ENCODE measurements at regions of chr17 and their contacts with region 1.

Region 1: GRCh38 chr17:81917565-81918332 is at the start of gene SIRT7:
- DNase-seq: peak; percentile 72
- ATAC-seq: peak; percentile 67
- H3K4me3 ChIP-seq: peak within 1 kb of the TSS; percentile 87 to 94 (median 93)
- H3K27ac ChIP-seq: peak within 1 kb of the TSS; percentile 46
- H3K4me1 ChIP-seq: peaks cover 27% of the 10 kb centered on the region
- H3K27me3 ChIP-seq: no peaks in the 10 kb centered on the region
- CTCF ChIP-seq: no peak; the same call in 1 of the 2 replicates
- EP300 ChIP-seq: no peak
- POLR2A ChIP-seq: peak; percentile 50 to 80; a peak in 3 of 4 replicates
- RAD21 ChIP-seq: peak; percentile 66
- total RNA-seq, gene SIRT7: 14.5 and 24.8 TPM in 2 replicates

Region 2: GRCh38 chr17:81934850-81935708 is 17.3 kb after region 1 on chr17:
- CTCF ChIA-PET with region 1: no interaction called
- POLR2A ChIA-PET with region 1: interaction called, 14 read pairs
- in situ Hi-C with region 1: no loop called
- intact Hi-C with region 1: no loop called
- DNase-seq: no peak
- ATAC-seq: no peak
- H3K4me3 ChIP-seq: peak overlapping the region in 1 of 3 experiments; percentile 88; a peak in 2 of 6 replicates
- H3K27ac ChIP-seq: no peak overlapping the region
- H3K4me1 ChIP-seq: peaks cover 58% of the 10 kb centered on the region
- H3K27me3 ChIP-seq: peaks cover 9 to 21% of the 10 kb centered on the region in 2 experiments; a peak in 4 of 5 replicates
- CTCF ChIP-seq: no peak
- EP300 ChIP-seq: no peak
- POLR2A ChIP-seq: no peak
- RAD21 ChIP-seq: no peak

Region 3: GRCh38 chr17:81961087-81961511 is 43.4 kb after region 1 on chr17 and contains the start of gene NOTUM:
- CTCF ChIA-PET with region 1: no interaction called
- POLR2A ChIA-PET with region 1: no interaction called
- in situ Hi-C with region 1: no loop called
- intact Hi-C with region 1: no loop called
- DNase-seq: peak; percentile 79
- ATAC-seq: peak; percentile 16
- H3K4me3 ChIP-seq: peak within 1 kb of the TSS; percentile 95 to 97 (median 96)
- H3K27ac ChIP-seq: peak within 1 kb of the TSS; percentile 86
- H3K4me1 ChIP-seq: peaks cover 73% of the 10 kb centered on the region
- H3K27me3 ChIP-seq: no peaks in the 10 kb centered on the region; a peak in 1 of 5 replicates
- CTCF ChIP-seq: peak; percentile 39
- EP300 ChIP-seq: peak in 1 of 2 experiments; percentile 16; a peak in 2 of 4 replicates
- POLR2A ChIP-seq: no peak; a peak in 1 of 4 replicates
- RAD21 ChIP-seq: peak; percentile 86
- total RNA-seq, gene NOTUM: 67.7 and 160 TPM in 2 replicates

Region 4: GRCh38 chr17:81977211-81978027 is 59.7 kb after region 1 on chr17 and contains the start of gene ASPSCR1:
- CTCF ChIA-PET with region 1: no interaction called
- POLR2A ChIA-PET with region 1: no interaction called
- in situ Hi-C with region 1: no loop called
- intact Hi-C with region 1: no loop called
- DNase-seq: peak; percentile 80
- ATAC-seq: peak; percentile 85
- H3K4me3 ChIP-seq: peak within 1 kb of the TSS; percentile 86 to 92 (median 87)
- H3K27ac ChIP-seq: peak within 1 kb of the TSS; percentile 85
- H3K4me1 ChIP-seq: peaks cover 56% of the 10 kb centered on the region
- H3K27me3 ChIP-seq: no peaks in the 10 kb centered on the region
- CTCF ChIP-seq: no peak; the same call in 1 of the 2 replicates
- EP300 ChIP-seq: peak; percentile 23 to 69; a peak in 3 of 4 replicates
- POLR2A ChIP-seq: peak; percentile 68 to 95
- RAD21 ChIP-seq: peak; percentile 81
- total RNA-seq, gene ASPSCR1: 221 and 314 TPM in 2 replicates

Region 5: DNA sequence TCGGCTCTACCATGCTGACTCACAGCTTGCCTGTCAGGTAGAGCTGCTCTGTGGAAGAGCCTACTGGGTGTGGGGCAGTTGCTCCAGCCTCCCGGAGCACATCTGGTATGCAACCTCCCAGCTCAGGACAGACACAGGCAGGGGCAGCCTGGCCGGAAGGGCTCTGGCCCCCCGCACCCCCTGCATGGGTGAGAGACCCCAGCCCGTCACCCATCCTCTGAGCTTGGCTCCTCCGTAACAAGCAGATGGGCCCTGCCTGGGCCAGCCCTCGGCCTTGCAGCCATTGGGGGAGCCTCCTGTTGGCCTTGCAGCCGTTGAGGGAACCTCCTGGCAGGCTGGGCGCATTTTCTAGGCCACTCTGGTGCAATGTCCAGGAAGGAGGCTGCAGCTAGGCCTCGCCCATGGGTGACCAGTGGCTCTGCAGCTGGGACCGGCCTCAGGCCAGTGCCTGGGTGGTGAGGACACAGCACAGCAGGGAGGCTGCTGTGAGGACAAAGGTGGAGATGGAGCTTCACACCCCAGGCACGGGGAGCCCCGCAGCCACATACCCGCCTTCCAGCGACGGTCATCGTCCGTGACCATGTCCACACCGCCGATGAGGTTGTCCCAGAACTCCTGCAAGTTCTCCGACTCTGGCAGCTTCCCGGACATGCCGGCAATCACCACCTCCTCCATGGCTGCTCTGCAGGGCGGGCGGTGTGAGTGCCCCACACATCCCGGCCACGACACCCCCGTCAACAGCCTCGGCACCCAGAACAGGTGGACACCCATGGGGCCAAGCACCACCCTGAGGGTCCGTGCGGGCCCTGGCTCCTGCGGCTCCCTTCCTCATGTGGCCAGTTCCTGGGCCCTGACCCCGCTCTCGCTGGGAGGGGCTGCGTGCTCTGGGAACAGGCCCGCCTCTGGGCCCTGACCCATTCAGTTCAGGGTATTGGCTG is 178.3 kb after region 1 on chr17:
- CTCF ChIA-PET with region 1: no interaction called
- POLR2A ChIA-PET with region 1: no interaction called
- in situ Hi-C with region 1: no loop called
- intact Hi-C with region 1: no loop called
- DNase-seq: no peak
- ATAC-seq: peak; percentile 4
- H3K4me3 ChIP-seq: peak overlapping the region; percentile 72 to 96 (median 86)
- H3K27ac ChIP-seq: peak overlapping the region; percentile 89
- H3K4me1 ChIP-seq: peaks cover 58% of the 10 kb centered on the region
- H3K27me3 ChIP-seq: no peaks in the 10 kb centered on the region; a peak in 1 of 5 replicates
- CTCF ChIP-seq: no peak; the same call in 1 of the 2 replicates
- EP300 ChIP-seq: no peak
- POLR2A ChIP-seq: peak in 1 of 2 experiments; percentile 25; a peak in 1 of 4 replicates
- RAD21 ChIP-seq: no peak